Mammary epithelial cell (primary cell): ENCODE measurements at regions of chr20 and their contacts with region 1.

Region 1: DNA sequence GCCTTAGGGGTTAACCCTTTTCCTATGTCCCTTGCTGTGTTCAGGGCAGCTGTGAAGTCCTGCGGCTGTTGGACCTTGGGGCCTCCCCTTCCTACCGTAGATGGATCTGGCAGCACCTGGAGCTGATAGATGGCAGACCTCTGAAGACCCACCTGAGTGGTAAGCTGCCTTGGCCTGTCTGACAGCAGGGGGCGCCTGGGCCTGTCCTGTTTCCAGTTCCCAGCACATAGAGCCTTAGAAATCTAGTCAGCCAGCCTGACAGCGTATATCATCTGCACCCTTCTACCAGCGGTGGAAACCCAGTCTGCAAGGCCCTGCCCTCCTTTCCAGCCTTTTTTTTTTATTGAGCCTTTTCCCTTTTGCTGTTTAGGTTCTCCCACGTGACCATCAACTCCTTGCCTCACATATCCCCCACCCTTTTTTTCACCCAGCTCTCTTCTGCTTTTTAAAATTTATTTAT is 26.6 kb downstream of the CNBD2 start:
- DNase-seq: peak; percentile 66
- H3K4me3 ChIP-seq: no peak overlapping the region
- H3K27ac ChIP-seq: no peak overlapping the region
- H3K4me1 ChIP-seq: no peaks in the 10 kb centered on the region
- H3K27me3 ChIP-seq: no peaks in the 10 kb centered on the region
- CTCF ChIP-seq: peak; percentile 90 to 99

Region 2: GRCh38 chr20:36035745-36036144 is 40.7 kb after region 1 on chr20:
- CTCF ChIA-PET with region 1: no interaction called
- dilution Hi-C with region 1: no loop called
- in situ Hi-C with region 1: no loop called
- intact Hi-C with region 1: loop called (anchors 1 kb)
- DNase-seq: peak; percentile 95
- H3K4me3 ChIP-seq: no peak overlapping the region
- H3K27ac ChIP-seq: no peak overlapping the region
- H3K4me1 ChIP-seq: peaks cover 17% of the 10 kb centered on the region
- H3K27me3 ChIP-seq: no peaks in the 10 kb centered on the region
- CTCF ChIP-seq: no peak

Region 3: GRCh38 chr20:36145877-36146707 is 151.1 kb after region 1 on chr20:
- CTCF ChIA-PET with region 1: interaction called, 22 read pairs
- dilution Hi-C with region 1: no loop called
- in situ Hi-C with region 1: loop called in 1 of 2 experiments (anchors 5 kb)
- intact Hi-C with region 1: no loop called
- DNase-seq: no peak
- H3K4me3 ChIP-seq: no peak overlapping the region
- H3K27ac ChIP-seq: no peak overlapping the region
- H3K4me1 ChIP-seq: peaks cover 13% of the 10 kb centered on the region
- H3K27me3 ChIP-seq: no peaks in the 10 kb centered on the region
- CTCF ChIP-seq: no peak

Region 4: DNA sequence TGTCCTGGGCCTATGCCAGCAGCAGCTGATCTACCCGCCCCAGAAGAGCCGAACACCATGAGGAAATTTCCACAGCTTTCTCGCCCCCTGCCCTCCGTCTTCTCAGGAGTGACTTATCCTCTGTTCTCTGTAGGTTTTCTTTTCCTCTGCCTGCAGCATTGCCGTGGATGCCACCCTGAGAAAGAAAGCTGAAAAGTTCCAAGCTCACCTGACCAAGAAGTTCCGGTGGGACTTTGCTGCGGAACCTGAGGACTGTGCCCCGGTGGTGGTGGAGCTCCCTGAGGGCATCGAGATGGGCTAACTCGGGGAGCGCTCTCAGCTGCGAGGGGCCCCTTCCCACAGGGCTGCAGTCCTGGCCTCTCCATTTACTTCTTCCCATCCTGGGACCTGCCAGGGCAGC is 260.4 kb after region 1 on chr20:
- CTCF ChIA-PET with region 1: interaction called, 10 read pairs
- dilution Hi-C with region 1: no loop called
- in situ Hi-C with region 1: no loop called
- intact Hi-C with region 1: no loop called
- DNase-seq: no peak
- H3K4me3 ChIP-seq: no peak overlapping the region
- H3K27ac ChIP-seq: no peak overlapping the region
- H3K4me1 ChIP-seq: peaks cover 25% of the 10 kb centered on the region
- H3K27me3 ChIP-seq: no peaks in the 10 kb centered on the region
- CTCF ChIP-seq: no peak

Region 5: GRCh38 chr20:36454698-36455427 is 459.8 kb after region 1 on chr20:
- CTCF ChIA-PET with region 1: interaction called, 26 read pairs
- dilution Hi-C with region 1: no loop called
- in situ Hi-C with region 1: no loop called
- intact Hi-C with region 1: no loop called
- DNase-seq: no peak
- H3K4me3 ChIP-seq: no peak overlapping the region
- H3K27ac ChIP-seq: no peak overlapping the region
- H3K4me1 ChIP-seq: no peaks in the 10 kb centered on the region
- H3K27me3 ChIP-seq: no peaks in the 10 kb centered on the region
- CTCF ChIP-seq: no peak